Cardiac septum (tissue), 1 donor: ENCODE measurements at regions of chr16 and their contacts with region 1.

Region 1: DNA sequence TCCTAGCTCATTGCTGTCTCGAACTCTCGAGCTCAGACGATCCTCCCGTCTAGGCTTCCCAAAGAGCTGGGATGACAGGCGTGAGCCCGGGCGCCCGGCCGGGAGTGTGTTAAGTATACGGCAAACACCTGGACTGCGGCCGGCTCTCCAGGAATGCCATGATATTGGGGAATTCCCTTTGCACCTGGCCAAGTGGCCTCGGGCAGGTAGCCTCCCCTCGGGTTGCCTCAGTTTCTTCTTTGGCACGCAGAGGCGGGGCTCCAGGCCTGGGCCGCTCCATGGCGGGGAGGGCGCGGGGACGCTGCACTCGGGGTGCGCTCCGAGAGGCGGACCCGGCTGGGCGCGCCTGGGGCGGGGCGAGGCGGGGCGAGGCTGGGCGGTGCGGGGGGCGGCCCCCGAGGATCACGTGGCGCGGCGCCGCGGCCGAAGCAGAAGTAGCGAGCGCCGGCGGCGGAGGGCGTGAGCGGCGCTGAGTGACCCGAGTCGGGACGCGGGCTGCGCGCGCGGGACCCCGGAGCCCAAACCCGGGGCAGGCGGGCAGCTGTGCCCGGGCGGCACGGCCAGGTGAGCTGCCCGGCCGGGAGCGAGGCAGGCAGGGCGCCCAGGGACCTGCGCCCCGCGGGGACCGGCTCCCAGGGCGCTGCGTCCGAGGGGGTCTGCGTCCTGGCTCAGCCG is at the start of gene PLCG2:
- DNase-seq: peak; percentile 95
- total RNA-seq, gene PLCG2: 8.5 TPM

Region 2: GRCh38 chr16:81863630-81864352 is 84.8 kb after region 1 on chr16:
- intact Hi-C with region 1: loop called (anchors 10 kb)
- DNase-seq: no peak